Activated T-helper 2 cell treated with anti-CD3 and anti-CD28 coated beads, Interferon-gamma antibody, Interleukin-2, Interleukin-4, amounts not matched to agents 10 μg/mL and 5 μg/mL and 100 μg/mL, durations not matched to agents 14 hours and 24 hours and 36 hours (primary cell): ENCODE measurements at regions of chr10 and their contacts with region 1.

Region 1: DNA sequence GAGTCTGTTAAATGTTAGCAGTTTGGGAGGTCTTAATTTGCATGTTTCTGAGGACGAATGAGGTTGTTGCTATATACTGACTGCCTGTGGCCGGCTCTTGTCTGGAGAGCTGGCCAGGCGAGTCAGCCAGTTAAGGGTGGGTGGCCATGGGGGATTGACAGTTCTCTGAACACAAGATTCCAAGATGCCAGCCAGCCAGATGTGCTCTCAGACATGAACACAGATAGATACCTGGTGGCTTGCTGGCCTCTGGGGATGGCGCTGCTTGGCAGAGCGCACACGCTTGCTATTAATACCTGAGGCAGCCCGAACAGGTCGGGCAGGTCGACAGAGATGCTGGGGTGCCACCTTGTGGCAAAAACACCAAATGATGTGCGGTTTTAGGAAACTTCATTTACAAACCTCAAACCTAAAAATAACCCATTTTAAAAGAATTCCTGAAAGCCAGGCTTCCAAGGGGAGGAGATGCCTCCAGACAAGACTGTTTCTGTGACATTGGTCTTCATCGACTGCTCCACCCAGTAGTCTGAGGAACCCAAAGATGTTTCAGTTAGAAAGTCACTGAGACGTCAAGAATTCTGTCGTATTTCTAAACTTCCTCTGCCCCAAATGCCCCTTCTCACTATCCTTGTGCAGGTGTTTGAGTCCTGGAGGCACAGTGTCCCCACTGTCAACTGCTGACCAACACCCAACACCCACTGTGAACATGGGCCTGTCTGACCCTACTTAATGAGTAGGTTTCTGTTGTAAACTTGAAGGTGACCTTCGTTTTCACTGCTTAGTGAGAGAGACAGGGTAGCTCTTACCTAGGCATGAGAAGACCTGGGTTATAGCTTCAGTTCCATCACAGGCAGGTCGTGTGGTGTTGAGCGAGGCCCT is 123.4 kb downstream of the NT5C2 start:
- DNase-seq: peak; percentile 58
- H3K4me3 Mint-ChIP-seq: no peak overlapping the region
- H3K27ac Mint-ChIP-seq: peak overlapping the region; percentile 78
- H3K4me1 Mint-ChIP-seq: peaks cover 26% of the 10 kb centered on the region
- H3K27me3 Mint-ChIP-seq: no peaks in the 10 kb centered on the region

Region 2: GRCh38 chr10:102555781-102556328 is 513.8 kb before region 1 on chr10:
- intact Hi-C with region 1: no loop called
- DNase-seq: no peak
- H3K4me3 Mint-ChIP-seq: no peak overlapping the region
- H3K27ac Mint-ChIP-seq: no peak overlapping the region
- H3K4me1 Mint-ChIP-seq: peaks cover 3% of the 10 kb centered on the region
- H3K27me3 Mint-ChIP-seq: no peaks in the 10 kb centered on the region

Region 3: GRCh38 chr10:102835007-102835482 is 234.6 kb before region 1 on chr10:
- intact Hi-C with region 1: loop called (anchors 1 kb)
- DNase-seq: peak; percentile 58
- H3K4me3 Mint-ChIP-seq: no peak overlapping the region
- H3K27ac Mint-ChIP-seq: no peak overlapping the region
- H3K4me1 Mint-ChIP-seq: peaks cover 5% of the 10 kb centered on the region
- H3K27me3 Mint-ChIP-seq: peaks cover 11% of the 10 kb centered on the region

Region 4: GRCh38 chr10:103038570-103038969 is 31.1 kb before region 1 on chr10:
- intact Hi-C with region 1: loop called (anchors 2 kb)
- DNase-seq: no peak
- H3K4me3 Mint-ChIP-seq: no peak overlapping the region
- H3K27ac Mint-ChIP-seq: no peak overlapping the region
- H3K4me1 Mint-ChIP-seq: peaks cover 7% of the 10 kb centered on the region
- H3K27me3 Mint-ChIP-seq: peaks cover under 1% of the 10 kb centered on the region